Heart right ventricle (tissue), 16 donors: ENCODE measurements at regions of chr7 and their contacts with region 1.

Region 1: DNA sequence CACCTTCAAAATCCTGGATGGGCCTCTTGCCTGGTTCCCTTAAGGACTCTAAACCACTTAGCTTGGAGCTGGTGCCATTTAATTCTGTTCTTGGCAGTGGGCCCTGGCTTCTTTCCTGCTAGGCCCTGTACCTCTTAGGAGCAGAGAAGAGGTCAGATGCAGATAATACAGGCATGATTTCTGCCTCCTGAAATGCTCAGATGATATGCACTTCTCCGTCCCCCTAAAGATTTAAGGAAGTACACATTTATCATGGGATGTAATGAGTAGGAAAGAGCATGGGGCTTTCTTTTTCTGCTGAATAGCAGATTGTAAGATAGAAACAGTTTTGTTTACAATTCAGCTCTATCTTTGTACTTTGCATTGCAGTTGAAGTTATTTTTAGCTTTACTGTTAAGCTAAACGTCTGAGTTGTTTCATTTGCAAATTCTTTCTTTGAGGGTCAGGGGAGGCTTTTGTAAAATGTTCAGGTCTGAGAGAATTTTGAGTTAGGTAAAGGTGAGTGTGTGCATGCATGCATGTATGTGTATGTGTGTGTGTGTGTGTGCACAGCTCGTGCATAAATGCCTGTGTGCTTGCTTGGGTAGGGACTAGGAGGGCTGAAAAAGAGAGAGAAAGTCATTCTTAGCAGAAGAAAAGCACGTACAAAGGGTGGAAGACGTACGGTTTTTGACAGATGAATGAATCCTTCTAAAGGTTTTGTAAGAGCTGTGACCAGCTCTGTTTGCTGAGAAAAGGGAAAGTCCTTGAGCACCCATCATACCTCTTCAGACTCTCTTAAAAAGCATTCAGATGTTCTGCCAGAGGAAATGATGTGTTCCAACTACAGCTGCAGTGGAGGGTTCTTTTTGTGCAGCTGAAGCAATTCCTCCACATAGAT is 364.2 kb downstream of the AUTS2 start:
- DNase-seq: peak; percentile 64 to 71
- ATAC-seq: peak; percentile 47 to 91 (median 85)
- H3K4me3 ChIP-seq: peak overlapping the region in 2 of 10 donors; percentile 2 to 10
- H3K27ac ChIP-seq: peak overlapping the region in 7 of 10 donors; percentile 21 to 62 (median 36)
- H3K4me1 ChIP-seq: peaks cover 0 to 63% (median 42%) of the 10 kb centered on the region in 9 donors
- H3K27me3 ChIP-seq: no peaks in the 10 kb centered on the region
- CTCF ChIP-seq: no peak

Region 2: DNA sequence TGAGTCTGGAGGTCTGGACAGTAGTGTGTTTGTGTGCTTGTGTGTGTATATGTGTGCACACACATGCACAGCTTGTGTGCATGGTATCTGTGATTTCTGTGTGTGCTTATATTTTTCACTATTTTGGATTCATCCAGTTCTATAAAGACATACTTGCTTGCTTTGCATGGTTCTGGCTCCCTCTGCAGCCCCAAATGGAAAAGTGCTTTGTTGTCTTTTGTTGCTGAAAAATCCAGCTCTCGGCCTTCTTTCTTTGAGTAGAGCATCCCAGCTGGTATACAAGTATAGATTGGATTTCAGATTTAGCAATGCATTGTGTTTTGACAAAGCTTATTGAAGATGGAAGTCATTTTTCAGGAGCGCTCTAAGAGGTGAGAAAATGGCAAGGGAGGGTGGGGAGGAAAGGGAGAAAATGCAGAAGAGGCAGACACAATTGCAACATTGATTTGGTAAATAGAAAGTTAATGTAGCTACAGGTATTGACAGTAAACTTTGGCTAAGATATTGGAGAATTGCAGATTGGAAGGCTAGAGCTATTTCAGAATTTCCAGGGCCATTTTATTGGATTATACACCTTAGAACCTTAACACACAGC is 30.3 kb before region 1 on chr7:
- intact Hi-C with region 1: loop called in 1 of 10 experiments (anchors 1 kb)
- DNase-seq: peak in 1 of 2 donors; percentile 23
- ATAC-seq: peak in 3 of 8 donors; percentile 33 to 55 (median 54)
- H3K4me3 ChIP-seq: no peak overlapping the region
- H3K27ac ChIP-seq: no peak overlapping the region
- H3K4me1 ChIP-seq: peaks cover 0 to 15% (median 12%) of the 10 kb centered on the region in 9 donors
- H3K27me3 ChIP-seq: no peaks in the 10 kb centered on the region
- CTCF ChIP-seq: peak; percentile 55 to 79 (median 69)

Region 3: GRCh38 chr7:69992938-69993337 is 30.5 kb after region 1 on chr7:
- intact Hi-C with region 1: no loop called
- DNase-seq: no peak
- ATAC-seq: peak in 1 of 8 donors; percentile 44
- H3K4me3 ChIP-seq: no peak overlapping the region
- H3K27ac ChIP-seq: no peak overlapping the region
- H3K4me1 ChIP-seq: peaks cover 3 to 27% (median 13%) of the 10 kb centered on the region in 9 donors
- H3K27me3 ChIP-seq: no peaks in the 10 kb centered on the region
- CTCF ChIP-seq: no peak

Region 4: GRCh38 chr7:70361821-70362220 is 399.4 kb after region 1 on chr7:
- intact Hi-C with region 1: no loop called
- DNase-seq: no peak
- ATAC-seq: no peak
- H3K4me3 ChIP-seq: no peak overlapping the region
- H3K27ac ChIP-seq: no peak overlapping the region
- H3K4me1 ChIP-seq: peaks cover 0 to 8% (median 0%) of the 10 kb centered on the region in 9 donors
- H3K27me3 ChIP-seq: no peaks in the 10 kb centered on the region
- CTCF ChIP-seq: no peak